ENCODE measurements at regions of chr14 and their contacts with region 1.

Region 1: DNA sequence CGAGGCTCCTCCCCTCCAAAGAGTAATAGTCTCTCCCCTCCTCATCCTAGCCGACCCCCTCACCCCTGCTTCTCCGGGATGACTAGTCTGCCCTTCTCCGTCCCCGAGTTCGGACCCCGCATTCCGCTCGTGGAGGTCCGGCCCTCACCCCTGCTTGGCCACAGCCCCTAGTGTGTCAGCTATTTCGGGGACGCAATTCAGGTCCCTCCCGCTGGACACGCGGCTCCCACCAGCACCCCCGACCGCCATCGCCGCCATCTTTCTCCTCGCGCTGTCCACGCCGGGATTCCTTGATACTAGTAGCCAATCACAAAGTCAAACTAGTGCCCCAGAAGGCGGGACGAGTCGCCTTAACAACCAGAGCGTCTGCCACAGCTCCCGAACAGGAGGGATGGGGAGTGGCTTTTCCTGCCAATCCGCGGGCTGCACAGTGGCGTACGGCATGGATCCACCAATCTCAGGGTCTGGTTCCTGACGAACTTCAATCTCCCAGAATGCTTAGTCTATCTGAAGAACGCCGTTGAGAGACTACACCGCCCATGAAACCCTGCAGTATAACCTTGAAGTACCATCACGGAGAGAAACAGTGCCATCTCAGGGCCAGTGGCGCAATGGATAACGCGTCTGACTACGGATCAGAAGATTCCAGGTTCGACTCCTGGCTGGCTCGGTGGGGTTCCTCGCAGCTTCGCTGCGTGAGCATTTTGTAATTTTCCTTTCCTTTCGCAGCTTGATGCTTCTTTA is at the start of gene PRMT5:
- DNase-seq: peak; percentile 99
- H3K4me3 ChIP-seq: peak within 1 kb of the TSS; percentile 65 to 94 (median 86)
- H3K27ac ChIP-seq: peak within 1 kb of the TSS; percentile 95
- H3K4me1 ChIP-seq: peaks cover 0 to 3% (median 1%) of the 10 kb centered on the region in 4 experiments; a peak in 3 of 7 replicates
- H3K27me3 ChIP-seq: no peaks in the 10 kb centered on the region
- CTCF ChIP-seq: no peak
- EP300 ChIP-seq: no peak
- POLR2A ChIP-seq: peak; percentile 82 to 95
- RAD21 ChIP-seq: no peak
- total RNA-seq, gene PRMT5: 159 and 171 TPM in 2 replicates

Region 2: DNA sequence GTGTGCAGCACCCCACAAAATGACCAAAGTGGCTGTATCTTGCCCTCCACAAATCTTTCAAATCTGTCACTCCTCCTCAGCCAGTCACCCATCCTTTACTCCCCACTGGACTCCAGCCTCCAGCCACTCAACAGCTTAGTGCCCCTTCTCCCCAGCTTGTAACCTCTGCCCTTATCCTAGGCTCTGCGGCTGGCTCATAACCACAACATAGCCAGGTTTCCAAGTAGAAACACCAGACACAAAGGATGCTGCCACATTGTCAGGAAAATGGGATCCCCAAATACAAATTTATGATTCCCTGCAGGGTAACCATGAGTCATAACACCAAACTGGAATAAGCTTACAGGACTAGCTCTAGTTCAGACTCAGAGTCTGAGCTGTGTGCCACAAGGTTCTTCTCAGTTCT is 147.7 kb before region 1 on chr14:
- CTCF ChIA-PET with region 1: no interaction called
- POLR2A ChIA-PET with region 1: no interaction called
- DNase-seq: no peak
- H3K4me3 ChIP-seq: no peak overlapping the region
- H3K27ac ChIP-seq: no peak overlapping the region
- H3K4me1 ChIP-seq: no peaks in the 10 kb centered on the region; a peak in 1 of 7 replicates
- H3K27me3 ChIP-seq: no peaks in the 10 kb centered on the region
- CTCF ChIP-seq: no peak
- EP300 ChIP-seq: no peak
- POLR2A ChIP-seq: no peak
- RAD21 ChIP-seq: no peak

Region 3: DNA sequence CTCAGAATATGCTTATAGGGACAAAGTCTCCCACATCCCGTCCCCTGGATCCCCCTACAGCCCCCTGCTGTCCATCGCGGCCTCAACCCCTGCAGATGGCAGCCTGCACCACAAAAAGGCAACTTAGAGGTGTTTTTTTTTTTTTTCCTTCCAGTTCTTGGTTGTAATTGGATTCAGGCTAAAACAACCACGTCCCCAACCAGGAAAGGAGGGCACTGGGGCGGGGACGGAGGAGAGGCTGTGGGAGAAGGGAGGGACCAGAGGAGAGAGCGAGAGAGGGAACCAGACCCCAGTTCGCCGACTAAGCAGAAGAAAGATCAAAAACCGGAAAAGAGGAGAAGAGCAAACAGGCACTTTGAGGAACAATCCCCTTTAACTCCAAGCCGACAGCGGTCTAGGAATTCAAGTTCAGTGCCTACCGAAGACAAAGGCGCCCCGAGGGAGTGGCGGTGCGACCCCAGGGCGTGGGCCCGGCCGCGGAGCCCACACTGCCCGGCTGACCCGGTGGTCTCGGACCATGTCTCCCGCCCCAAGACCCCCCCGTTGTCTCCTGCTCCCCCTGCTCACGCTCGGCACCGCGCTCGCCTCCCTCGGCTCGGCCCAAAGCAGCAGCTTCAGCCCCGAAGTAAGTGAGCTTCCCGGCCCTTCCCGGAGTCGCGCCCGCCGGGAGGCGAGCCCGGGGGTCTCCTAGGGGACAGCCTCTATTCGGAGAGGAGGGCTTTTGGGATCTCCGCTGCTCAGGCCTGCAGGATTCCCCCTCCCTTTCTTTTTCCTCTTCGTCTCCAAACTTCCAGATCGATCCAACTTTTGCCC is 92.8 kb before region 1 on chr14 and contains the start of gene MMP14:
- CTCF ChIA-PET with region 1: interaction called, 3 read pairs
- POLR2A ChIA-PET with region 1: interaction called, 18 read pairs
- DNase-seq: peak in 1 of 2 experiments; percentile 60
- H3K4me3 ChIP-seq: peak within 1 kb of the TSS; percentile 80 to 99 (median 87)
- H3K27ac ChIP-seq: peak within 1 kb of the TSS; percentile 53
- H3K4me1 ChIP-seq: peaks cover 8 to 17% (median 14%) of the 10 kb centered on the region in 4 experiments
- H3K27me3 ChIP-seq: no peaks in the 10 kb centered on the region
- CTCF ChIP-seq: peak; percentile 29 to 41 (median 34); a peak in 3 of 4 replicates
- EP300 ChIP-seq: no peak
- POLR2A ChIP-seq: peak; percentile 43 to 72; a peak in 2 of 3 replicates
- RAD21 ChIP-seq: peak; percentile 36 to 54
- total RNA-seq, gene MMP14: 83.1 and 86.8 TPM in 2 replicates

Region 4: GRCh38 chr14:22918804-22919600 is 10.3 kb before region 1 on chr14 and contains the start of gene RBM23:
- CTCF ChIA-PET with region 1: interaction called, 13 read pairs
- POLR2A ChIA-PET with region 1: interaction called, 67 read pairs
- DNase-seq: peak; percentile 98 to 99
- H3K4me3 ChIP-seq: peak within 1 kb of the TSS; percentile 79 to 93 (median 92)
- H3K27ac ChIP-seq: peak within 1 kb of the TSS; percentile 98
- H3K4me1 ChIP-seq: peaks cover 0 to 7% (median 3%) of the 10 kb centered on the region in 4 experiments; a peak in 5 of 7 replicates
- H3K27me3 ChIP-seq: no peaks in the 10 kb centered on the region; a peak in 1 of 7 replicates
- CTCF ChIP-seq: no peak
- EP300 ChIP-seq: no peak
- POLR2A ChIP-seq: peak; percentile 80 to 98
- RAD21 ChIP-seq: no peak
- total RNA-seq, gene RBM23: 43.1 and 43.3 TPM in 2 replicates

Region 5: GRCh38 chr14:22945642-22946041 is 16.4 kb after region 1 on chr14:
- CTCF ChIA-PET with region 1: interaction called, 22 read pairs
- POLR2A ChIA-PET with region 1: interaction called, 4 read pairs
- DNase-seq: no peak
- H3K4me3 ChIP-seq: no peak overlapping the region
- H3K27ac ChIP-seq: no peak overlapping the region
- H3K4me1 ChIP-seq: no peaks in the 10 kb centered on the region
- H3K27me3 ChIP-seq: no peaks in the 10 kb centered on the region
- CTCF ChIP-seq: no peak
- EP300 ChIP-seq: no peak
- POLR2A ChIP-seq: no peak
- RAD21 ChIP-seq: no peak

Region 6: DNA sequence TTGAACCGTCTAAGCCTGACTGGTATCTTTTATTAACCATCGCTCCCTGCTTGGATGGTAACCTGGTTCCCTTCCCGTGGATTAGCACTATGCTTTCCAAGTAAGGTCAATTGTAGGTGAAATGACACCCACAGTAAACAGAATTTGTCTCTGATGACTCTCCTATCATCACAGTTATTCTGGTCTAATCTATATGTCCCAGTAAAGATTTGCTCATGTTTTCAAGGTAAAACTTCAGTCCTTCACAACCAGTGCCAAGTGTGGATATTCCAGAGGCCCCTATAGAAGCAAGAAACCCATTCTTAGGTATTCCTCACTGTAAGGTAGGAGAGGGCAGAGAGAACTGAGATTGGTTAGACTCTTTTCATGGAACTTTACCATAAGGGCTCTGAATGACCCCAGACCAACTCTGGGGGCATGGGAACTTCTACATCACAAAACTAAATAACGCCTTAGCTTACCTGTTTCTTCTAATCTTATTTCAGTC is 37.5 kb after region 1 on chr14:
- CTCF ChIA-PET with region 1: interaction called, 5 read pairs
- POLR2A ChIA-PET with region 1: interaction called, 13 read pairs
- DNase-seq: no peak
- H3K4me3 ChIP-seq: no peak overlapping the region
- H3K27ac ChIP-seq: no peak overlapping the region
- H3K4me1 ChIP-seq: no peaks in the 10 kb centered on the region
- H3K27me3 ChIP-seq: no peaks in the 10 kb centered on the region
- CTCF ChIP-seq: no peak
- EP300 ChIP-seq: no peak
- POLR2A ChIP-seq: no peak; a peak in 1 of 3 replicates
- RAD21 ChIP-seq: no peak

Region 7: DNA sequence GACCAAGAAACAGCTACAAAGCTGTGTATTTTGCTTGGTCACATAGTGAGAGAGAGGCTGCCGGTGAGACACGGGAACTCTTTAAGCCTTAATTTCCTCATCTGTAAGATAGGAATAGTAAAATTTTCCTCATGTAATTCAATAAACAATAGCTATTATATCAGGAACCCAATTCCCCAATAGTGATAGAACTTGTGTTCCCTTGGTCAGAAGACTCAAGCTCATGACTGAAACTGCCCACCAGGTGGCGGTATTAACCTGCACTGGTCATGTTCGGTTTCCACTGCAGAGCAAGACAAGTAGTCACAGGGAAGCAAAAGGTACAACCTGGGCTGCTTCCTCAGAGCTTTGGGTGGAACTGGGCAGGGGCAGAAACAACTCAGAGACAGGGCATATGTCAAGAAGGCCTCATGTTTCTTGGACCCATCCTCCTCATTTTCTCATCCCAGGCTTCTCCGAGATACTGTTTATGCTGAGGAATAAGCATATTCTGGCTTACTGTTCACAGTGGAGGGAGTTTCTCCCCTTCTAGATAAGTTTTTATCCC is 57.3 kb after region 1 on chr14:
- CTCF ChIA-PET with region 1: interaction called, 20 read pairs
- POLR2A ChIA-PET with region 1: interaction called, 19 read pairs
- DNase-seq: peak in 1 of 2 experiments; percentile 95
- H3K4me3 ChIP-seq: no peak overlapping the region
- H3K27ac ChIP-seq: no peak overlapping the region
- H3K4me1 ChIP-seq: no peaks in the 10 kb centered on the region
- H3K27me3 ChIP-seq: peaks cover 0 to 2% (median under 1%) of the 10 kb centered on the region in 4 experiments; a peak in 1 of 7 replicates
- CTCF ChIP-seq: peak; percentile 74 to 96 (median 90)
- EP300 ChIP-seq: no peak
- POLR2A ChIP-seq: no peak
- RAD21 ChIP-seq: peak; percentile 94 to 96

Region 8: DNA sequence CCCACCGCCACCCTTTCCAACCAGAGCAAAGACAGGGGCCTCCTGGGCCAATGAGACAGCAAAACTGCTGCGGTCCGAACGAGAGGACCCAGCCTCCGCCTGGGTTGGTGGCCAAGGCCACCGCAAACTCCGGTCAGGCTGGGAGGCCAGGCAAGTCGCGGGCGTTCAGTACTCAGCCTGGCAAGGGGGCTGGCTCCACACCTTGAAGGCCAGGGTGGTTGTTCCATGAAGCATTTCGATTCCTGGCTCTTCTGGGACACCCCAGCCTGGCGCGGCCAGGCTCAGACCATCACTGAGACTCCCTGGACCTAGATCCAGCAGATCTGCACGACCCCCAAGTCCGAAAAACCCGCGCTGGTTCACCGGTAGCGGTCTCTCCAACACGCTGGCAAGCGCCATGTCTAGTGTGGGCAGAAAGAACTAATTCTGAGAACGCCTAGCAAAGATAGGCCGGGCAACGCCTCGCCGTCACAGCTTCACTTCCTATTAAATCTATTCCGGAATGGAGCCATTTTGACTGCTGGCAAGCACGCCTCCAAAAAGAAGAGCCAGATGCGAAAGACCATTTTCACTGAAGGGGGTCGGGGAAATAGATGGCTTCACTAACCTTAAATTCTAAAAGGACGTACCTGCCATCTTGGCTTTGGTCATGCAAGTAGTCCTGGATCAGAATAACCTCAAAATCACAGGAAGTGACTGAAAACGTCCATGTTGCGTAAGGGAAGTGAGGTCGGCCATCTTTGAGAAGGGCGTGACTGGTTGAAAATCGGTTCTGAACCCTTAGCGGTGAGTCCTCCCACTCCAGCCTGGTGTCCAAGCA is 105.4 kb after region 1 on chr14 and contains the start of gene PSMB5:
- CTCF ChIA-PET with region 1: interaction called, 3 read pairs
- POLR2A ChIA-PET with region 1: interaction called, 13 read pairs
- DNase-seq: peak; percentile 80 to 89
- H3K4me3 ChIP-seq: peak within 1 kb of the TSS; percentile 79 to 95 (median 88)
- H3K27ac ChIP-seq: peak within 1 kb of the TSS; percentile 98
- H3K4me1 ChIP-seq: peaks cover 0 to 3% (median 1%) of the 10 kb centered on the region in 4 experiments; a peak in 2 of 7 replicates
- H3K27me3 ChIP-seq: no peaks in the 10 kb centered on the region
- CTCF ChIP-seq: no peak
- EP300 ChIP-seq: no peak
- POLR2A ChIP-seq: peak; percentile 75 to 89
- RAD21 ChIP-seq: no peak
- total RNA-seq, gene PSMB5: 246 and 254 TPM in 2 replicates

Measured in H1 (cell line).